Activated B cell treated with CpG ODN at 0.5 μM for 24 hours (primary cell): ENCODE measurements at regions of chr6 and their contacts with region 1.

Region 1: GRCh38 chr6:90296346-90297114 is at the start of gene BACH2:
- DNase-seq: peak; percentile 85
- ATAC-seq: peak; percentile 76
- H3K4me3 Mint-ChIP-seq: peak within 1 kb of the TSS; percentile 89
- H3K27ac Mint-ChIP-seq: peak within 1 kb of the TSS; percentile 89
- H3K4me1 Mint-ChIP-seq: peaks cover 55% of the 10 kb centered on the region
- H3K27me3 Mint-ChIP-seq: no peaks in the 10 kb centered on the region
- CTCF ChIP-seq: no peak
- total RNA-seq, gene BACH2: 79.6 and 90.4 TPM in 2 replicates

Region 2: DNA sequence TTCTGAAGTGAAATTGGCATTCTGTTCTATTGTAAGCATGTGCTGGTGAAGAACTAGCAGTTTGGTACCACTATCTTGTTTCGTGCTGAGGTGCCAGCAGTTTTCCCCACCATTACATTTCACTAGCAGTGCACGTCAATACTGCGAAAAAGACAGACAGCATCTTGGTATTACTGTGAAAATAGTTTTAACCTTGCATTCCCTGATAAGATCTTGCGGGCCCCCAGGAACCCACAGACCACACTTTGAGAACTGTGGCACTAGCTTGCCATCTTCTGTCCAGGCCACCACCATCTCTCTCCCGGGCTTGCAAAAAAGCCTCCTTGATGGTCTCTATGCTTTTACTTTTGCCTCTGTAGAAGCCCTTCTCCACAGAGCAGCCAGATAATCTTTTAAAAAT is 185.6 kb before region 1 on chr6:
- CTCF ChIA-PET with region 1: no interaction called
- POLR2A ChIA-PET with region 1: interaction called, 10 read pairs
- intact Hi-C with region 1: no loop called
- DNase-seq: no peak
- ATAC-seq: no peak
- H3K4me3 Mint-ChIP-seq: no peak overlapping the region
- H3K27ac Mint-ChIP-seq: peak overlapping the region; percentile 86
- H3K4me1 Mint-ChIP-seq: peaks cover 82% of the 10 kb centered on the region
- H3K27me3 Mint-ChIP-seq: no peaks in the 10 kb centered on the region
- CTCF ChIP-seq: no peak

Region 3: GRCh38 chr6:90274451-90275030 is 22.0 kb before region 1 on chr6:
- CTCF ChIA-PET with region 1: interaction called, 3 read pairs
- POLR2A ChIA-PET with region 1: interaction called, 12 read pairs
- intact Hi-C with region 1: no loop called
- DNase-seq: peak; percentile 43
- ATAC-seq: peak; percentile 84
- H3K4me3 Mint-ChIP-seq: peak overlapping the region; percentile 64
- H3K27ac Mint-ChIP-seq: peak overlapping the region; percentile 85
- H3K4me1 Mint-ChIP-seq: peaks cover 93% of the 10 kb centered on the region
- H3K27me3 Mint-ChIP-seq: no peaks in the 10 kb centered on the region
- CTCF ChIP-seq: no peak

Region 4: DNA sequence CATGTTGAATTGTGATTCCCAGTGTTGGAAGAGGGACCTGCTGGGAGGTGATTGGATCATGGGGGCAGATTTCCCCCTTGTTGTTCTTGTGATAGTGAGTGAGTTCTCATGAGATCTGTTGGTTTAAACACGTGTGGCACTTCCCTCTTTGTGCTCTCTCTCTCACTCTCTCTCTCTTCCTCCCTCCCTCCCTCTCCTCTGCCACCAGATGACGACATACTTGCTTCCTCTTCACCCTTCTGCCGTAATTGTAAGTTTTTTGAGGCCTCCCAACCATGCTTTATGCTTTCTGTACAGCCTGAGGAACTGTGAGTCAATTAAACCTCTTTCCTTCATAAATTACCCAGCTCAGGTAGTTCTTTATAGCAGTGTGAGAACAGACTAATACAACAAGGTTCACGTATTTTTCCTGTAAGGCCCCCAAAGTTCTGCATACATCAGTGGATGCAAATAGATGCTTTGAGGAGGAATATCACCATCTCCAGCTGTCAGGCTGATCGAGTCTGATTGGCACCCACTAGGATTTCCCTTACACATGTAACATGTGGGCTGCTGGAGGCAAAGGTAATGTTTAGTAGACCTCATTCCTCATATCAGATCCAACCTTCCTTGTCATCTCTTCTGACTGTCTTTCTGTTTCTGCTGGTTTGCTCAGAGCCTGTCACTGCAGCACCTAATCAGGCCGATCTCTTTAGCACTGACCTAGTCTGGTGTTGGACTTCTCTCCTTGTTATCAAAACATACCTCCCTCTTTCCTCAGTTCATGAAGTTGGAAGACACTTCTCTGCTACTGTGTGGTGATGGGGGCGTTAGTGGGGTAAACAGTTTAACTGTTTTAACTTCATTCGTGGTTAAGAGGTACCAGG is 54.4 kb after region 1 on chr6:
- CTCF ChIA-PET with region 1: no interaction called
- POLR2A ChIA-PET with region 1: interaction called, 4 read pairs
- intact Hi-C with region 1: loop called (anchors 1 kb)
- DNase-seq: peak; percentile 20
- ATAC-seq: peak; percentile 95
- H3K4me3 Mint-ChIP-seq: peak overlapping the region; percentile 33
- H3K27ac Mint-ChIP-seq: peak overlapping the region; percentile 95
- H3K4me1 Mint-ChIP-seq: peaks cover 40% of the 10 kb centered on the region
- H3K27me3 Mint-ChIP-seq: no peaks in the 10 kb centered on the region
- CTCF ChIP-seq: no peak

Region 5: GRCh38 chr6:90383196-90383822 is 86.8 kb after region 1 on chr6:
- CTCF ChIA-PET with region 1: interaction called, 3 read pairs
- POLR2A ChIA-PET with region 1: interaction called, 16 read pairs
- intact Hi-C with region 1: loop called (anchors 1 kb)
- DNase-seq: no peak
- ATAC-seq: peak; percentile 80
- H3K4me3 Mint-ChIP-seq: peak overlapping the region; percentile 61
- H3K27ac Mint-ChIP-seq: peak overlapping the region; percentile 75
- H3K4me1 Mint-ChIP-seq: peaks cover 80% of the 10 kb centered on the region
- H3K27me3 Mint-ChIP-seq: no peaks in the 10 kb centered on the region
- CTCF ChIP-seq: no peak

Region 6: DNA sequence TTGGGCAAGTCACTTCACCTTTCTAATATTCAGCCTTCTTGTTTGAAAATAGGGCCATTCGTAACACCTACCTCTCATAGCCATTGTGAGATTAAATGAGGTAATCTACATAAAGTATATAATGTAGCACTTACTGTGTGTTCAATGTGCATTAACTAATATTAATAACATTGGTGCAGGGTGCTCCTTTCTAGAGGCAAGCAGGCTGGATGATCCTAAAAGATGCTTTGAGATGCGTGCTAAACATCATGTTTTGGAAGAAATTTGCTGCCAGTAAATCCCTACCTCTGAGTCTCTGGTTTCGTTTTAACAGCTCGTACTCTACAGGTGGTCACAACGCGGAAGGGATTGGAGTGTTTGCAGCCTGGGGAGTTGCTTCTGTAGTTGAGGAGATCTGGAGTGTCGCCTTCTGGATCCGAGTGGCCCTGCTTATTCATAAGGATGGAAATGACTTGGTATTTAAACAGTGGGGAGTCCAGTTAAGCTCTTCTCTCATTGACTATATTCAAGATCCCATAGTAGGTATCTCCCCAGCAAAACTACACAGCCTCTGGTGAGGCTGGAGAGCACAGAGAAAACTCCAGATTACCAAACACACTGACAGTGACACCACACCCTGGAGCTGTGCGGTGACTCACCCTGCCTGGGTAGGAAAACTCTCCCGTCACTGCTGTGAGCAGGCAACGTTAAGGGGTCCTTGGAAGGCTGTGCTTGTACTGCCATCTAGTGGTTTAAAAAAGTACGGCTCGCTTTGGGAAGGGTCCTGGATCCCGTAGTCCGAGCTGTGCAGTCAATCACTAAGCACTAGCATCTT is 182.5 kb after region 1 on chr6:
- CTCF ChIA-PET with region 1: interaction called, 88 read pairs
- POLR2A ChIA-PET with region 1: interaction called, 4 read pairs
- intact Hi-C with region 1: loop called (anchors 1 kb)
- DNase-seq: peak; percentile 54
- ATAC-seq: peak; percentile 96
- H3K4me3 Mint-ChIP-seq: no peak overlapping the region
- H3K27ac Mint-ChIP-seq: peak overlapping the region; percentile 64
- H3K4me1 Mint-ChIP-seq: peaks cover 22% of the 10 kb centered on the region
- H3K27me3 Mint-ChIP-seq: no peaks in the 10 kb centered on the region
- CTCF ChIP-seq: peak; percentile 95